ENCODE measurements at regions of chr11 and their contacts with region 1.

Region 1: DNA sequence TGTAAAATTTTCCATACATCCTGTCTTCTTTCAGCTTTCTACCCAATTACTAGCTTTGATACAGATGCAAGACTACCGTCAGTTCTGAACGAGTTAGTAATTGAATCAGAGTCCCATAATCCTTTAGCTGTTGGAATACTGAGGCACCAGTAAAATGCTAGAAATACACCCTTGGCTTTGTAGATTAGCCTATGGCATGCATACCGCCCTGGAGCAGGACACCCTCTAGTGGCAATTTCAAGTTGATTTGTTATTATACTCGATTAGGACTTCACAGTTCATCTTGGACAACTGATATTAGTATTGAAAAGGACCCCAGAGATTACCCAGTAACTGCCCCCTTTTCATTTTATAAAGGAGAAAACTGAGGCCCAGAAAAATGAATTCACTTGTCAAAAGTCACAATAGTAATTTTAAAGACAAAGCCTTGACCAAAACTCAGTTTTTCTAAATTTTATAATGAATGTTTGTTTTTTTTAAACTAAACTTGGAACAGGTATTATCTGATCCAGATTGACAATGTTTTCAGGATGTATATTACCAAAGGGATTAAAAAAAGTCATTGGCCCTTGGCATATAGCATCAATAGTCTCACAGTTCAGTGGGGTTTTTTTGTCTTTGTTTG is 72.6 kb downstream of the HIPK3 start:
- DNase-seq: peak in 13 of 14 experiments; percentile 12 to 75 (median 38)
- ATAC-seq: peak; percentile 78
- H3K4me3 ChIP-seq: no peak overlapping the region
- H3K4me3 Mint-ChIP-seq: no peak overlapping the region
- H3K27ac ChIP-seq: no peak overlapping the region
- H3K27ac Mint-ChIP-seq: peak overlapping the region; percentile 5
- H3K4me1 ChIP-seq: no peaks in the 10 kb centered on the region
- H3K4me1 Mint-ChIP-seq: peaks cover 35% of the 10 kb centered on the region
- H3K27me3 ChIP-seq: no peaks in the 10 kb centered on the region
- H3K27me3 Mint-ChIP-seq: no peaks in the 10 kb centered on the region
- CTCF ChIP-seq: peak; percentile 73

Region 2: GRCh38 chr11:32884770-32885384 is 444.9 kb before region 1 on chr11:
- CTCF ChIA-PET with region 1: no interaction called
- POLR2A ChIA-PET with region 1: no interaction called
- intact Hi-C with region 1: loop called in 1 of 2 experiments (anchors 10 kb)
- DNase-seq: peak in 3 of 14 experiments; percentile 13 to 34 (median 33)
- ATAC-seq: peak; percentile 52
- H3K4me3 ChIP-seq: no peak overlapping the region
- H3K4me3 Mint-ChIP-seq: no peak overlapping the region
- H3K27ac ChIP-seq: no peak overlapping the region
- H3K27ac Mint-ChIP-seq: no peak overlapping the region
- H3K4me1 ChIP-seq: no peaks in the 10 kb centered on the region
- H3K4me1 Mint-ChIP-seq: no peaks in the 10 kb centered on the region
- H3K27me3 ChIP-seq: no peaks in the 10 kb centered on the region
- H3K27me3 Mint-ChIP-seq: no peaks in the 10 kb centered on the region
- CTCF ChIP-seq: peak; percentile 47

Region 3: DNA sequence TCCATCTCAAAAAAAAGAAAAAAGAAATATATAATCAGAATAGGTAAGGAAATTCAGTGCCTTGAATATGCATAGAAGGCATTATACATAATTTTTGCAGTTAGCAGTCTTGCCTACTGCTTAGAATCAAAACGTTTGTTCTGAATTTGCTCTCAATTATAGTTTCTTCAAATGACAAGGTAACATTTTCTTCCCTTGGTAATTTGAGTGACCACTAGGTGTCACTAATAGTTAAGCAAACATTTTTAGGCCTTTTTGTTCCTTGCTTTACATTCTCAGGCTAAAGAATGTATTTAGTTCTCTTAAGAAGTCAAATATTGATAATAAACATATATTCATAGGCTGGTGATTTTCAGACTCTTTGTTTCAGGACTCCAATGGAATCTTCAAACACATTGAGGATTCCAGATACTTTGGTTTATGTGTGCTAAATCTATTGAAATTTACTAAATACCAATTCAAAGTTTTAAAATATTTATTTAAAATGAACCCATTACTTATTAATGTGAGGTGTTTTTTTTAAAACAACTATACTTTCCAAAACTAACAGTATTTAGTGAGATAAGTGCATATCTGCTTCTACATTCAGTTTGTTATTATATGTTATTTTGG is 369.2 kb before region 1 on chr11:
- CTCF ChIA-PET with region 1: no interaction called
- POLR2A ChIA-PET with region 1: no interaction called
- intact Hi-C with region 1: loop called (anchors 1 to 5 kb)
- DNase-seq: peak in 3 of 14 experiments; percentile 63 to 73 (median 73)
- ATAC-seq: no peak
- H3K4me3 ChIP-seq: no peak overlapping the region
- H3K4me3 Mint-ChIP-seq: no peak overlapping the region
- H3K27ac ChIP-seq: no peak overlapping the region
- H3K27ac Mint-ChIP-seq: no peak overlapping the region
- H3K4me1 ChIP-seq: no peaks in the 10 kb centered on the region
- H3K4me1 Mint-ChIP-seq: no peaks in the 10 kb centered on the region
- H3K27me3 ChIP-seq: no peaks in the 10 kb centered on the region
- H3K27me3 Mint-ChIP-seq: no peaks in the 10 kb centered on the region
- CTCF ChIP-seq: peak; percentile 81

Region 4: DNA sequence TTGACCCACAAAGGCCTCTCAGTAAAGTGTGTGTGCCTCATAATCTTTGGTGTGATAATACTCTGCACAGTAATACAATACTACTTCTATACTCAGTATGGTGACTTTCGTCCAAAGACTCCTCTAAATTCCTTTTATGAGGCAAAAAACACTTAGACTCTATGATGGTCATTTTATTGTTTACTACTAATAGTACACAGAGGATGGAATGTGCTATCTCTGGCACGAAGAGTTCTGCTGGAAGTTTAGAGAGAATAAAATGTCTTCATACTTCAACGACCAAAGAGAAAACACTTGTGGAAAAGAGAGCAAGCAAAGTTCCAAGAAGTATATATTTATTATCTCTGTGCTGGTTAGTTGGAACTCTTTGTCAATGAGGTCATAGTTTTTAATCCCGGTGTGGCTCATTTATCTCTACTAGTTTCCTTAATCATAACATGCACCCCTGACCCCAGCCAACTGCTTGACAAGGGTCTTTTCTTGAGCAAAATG is 161.1 kb before region 1 on chr11:
- CTCF ChIA-PET with region 1: interaction called, 3 read pairs
- POLR2A ChIA-PET with region 1: no interaction called
- intact Hi-C with region 1: loop called (anchors 1 kb)
- DNase-seq: no peak
- ATAC-seq: no peak
- H3K4me3 ChIP-seq: no peak overlapping the region
- H3K4me3 Mint-ChIP-seq: no peak overlapping the region
- H3K27ac ChIP-seq: no peak overlapping the region
- H3K27ac Mint-ChIP-seq: no peak overlapping the region
- H3K4me1 ChIP-seq: no peaks in the 10 kb centered on the region
- H3K4me1 Mint-ChIP-seq: no peaks in the 10 kb centered on the region
- H3K27me3 ChIP-seq: no peaks in the 10 kb centered on the region
- H3K27me3 Mint-ChIP-seq: no peaks in the 10 kb centered on the region
- CTCF ChIP-seq: no peak

Region 5: DNA sequence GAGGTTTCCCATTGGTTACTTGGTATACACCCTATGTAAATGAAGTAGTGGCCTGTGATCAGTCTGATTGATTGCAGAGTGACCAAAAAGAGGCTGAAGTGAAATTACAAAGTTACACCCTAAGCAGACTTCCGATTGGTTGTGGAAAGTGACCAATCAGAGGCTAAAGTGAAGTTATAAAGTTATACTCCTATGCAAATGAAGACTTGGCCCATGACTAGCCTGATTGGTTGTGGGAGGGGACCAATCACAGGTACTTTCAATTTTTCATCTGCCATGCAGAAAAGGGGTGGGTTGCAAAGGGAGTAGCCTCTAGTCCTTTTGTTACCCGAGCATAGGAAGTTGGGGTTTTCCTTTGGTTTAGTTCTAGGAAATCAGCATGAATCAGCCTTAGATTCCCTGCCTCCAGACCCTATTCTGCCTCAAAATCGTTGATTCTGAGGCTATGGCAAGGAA is 150.4 kb before region 1 on chr11:
- CTCF ChIA-PET with region 1: no interaction called
- POLR2A ChIA-PET with region 1: no interaction called
- intact Hi-C with region 1: no loop called
- DNase-seq: peak in 1 of 14 experiments; percentile 35
- ATAC-seq: no peak
- H3K4me3 ChIP-seq: no peak overlapping the region
- H3K4me3 Mint-ChIP-seq: no peak overlapping the region
- H3K27ac ChIP-seq: no peak overlapping the region
- H3K27ac Mint-ChIP-seq: no peak overlapping the region
- H3K4me1 ChIP-seq: peaks cover 6% of the 10 kb centered on the region
- H3K4me1 Mint-ChIP-seq: peaks cover 10% of the 10 kb centered on the region
- H3K27me3 ChIP-seq: no peaks in the 10 kb centered on the region
- H3K27me3 Mint-ChIP-seq: no peaks in the 10 kb centered on the region
- CTCF ChIP-seq: no peak